A549 (cell line): ENCODE measurements at regions of chr17 and their contacts with region 1.

Region 1: GRCh38 chr17:40622509-40622928 is 25.1 kb downstream of the SMARCE1 start:
- DNase-seq: no peak
- ATAC-seq: no peak
- H3K4me3 ChIP-seq: no peak overlapping the region
- H3K27ac ChIP-seq: no peak overlapping the region
- H3K4me1 ChIP-seq: 0 out of 3 replicates have a peak, but pooled peaks cover 3% of the 10 kb centered on the region
- CTCF ChIP-seq: no peak
- EP300 ChIP-seq: no peak
- POLR2A ChIP-seq: no peak
- RAD21 ChIP-seq: no peak

Region 2: DNA sequence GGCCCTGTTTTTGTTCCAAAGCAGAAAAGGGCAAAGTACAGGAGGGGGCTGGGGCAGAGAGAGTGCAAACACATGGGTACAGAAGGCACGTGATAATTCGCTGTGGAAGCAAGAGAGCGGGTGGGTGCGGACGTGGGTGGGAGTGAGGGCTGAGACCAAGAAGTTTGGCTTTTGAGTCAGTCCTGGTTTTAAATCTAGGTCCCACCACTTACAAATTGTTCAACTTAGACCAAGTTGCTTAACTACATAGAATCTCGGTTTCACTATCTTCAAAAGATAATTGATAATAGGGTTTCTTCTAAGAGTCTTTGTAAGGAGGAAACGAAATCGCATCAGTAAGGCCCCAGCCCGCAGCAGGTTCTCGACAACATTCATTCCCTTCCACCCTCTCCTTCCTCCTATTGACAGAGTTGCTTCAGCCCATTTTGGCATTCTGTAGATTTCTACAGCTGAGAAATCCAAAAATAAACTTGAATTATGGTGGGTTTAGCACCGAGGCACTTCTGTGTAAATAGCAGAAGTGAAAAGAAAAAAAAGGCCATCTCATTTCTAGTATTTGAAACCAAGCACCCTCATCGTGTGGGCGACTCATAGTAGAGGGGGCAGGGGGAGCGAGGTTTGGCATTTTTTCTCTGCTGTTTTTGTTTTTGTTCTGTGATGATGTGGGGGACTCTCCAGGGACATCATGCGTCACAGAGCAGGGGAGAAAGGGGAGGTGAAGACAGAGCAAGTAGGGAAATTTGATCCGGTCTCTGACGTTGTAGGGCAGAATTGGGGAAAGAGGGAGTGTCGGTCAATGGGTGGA is 23.7 kb before region 1 on chr17:
- CTCF ChIA-PET with region 1: interaction called, 11 read pairs
- POLR2A ChIA-PET with region 1: no interaction called
- DNase-seq: no peak
- ATAC-seq: no peak
- H3K4me3 ChIP-seq: no peak overlapping the region
- H3K27ac ChIP-seq: no peak overlapping the region
- H3K4me1 ChIP-seq: no peaks in the 10 kb centered on the region
- CTCF ChIP-seq: no peak
- EP300 ChIP-seq: no peak
- POLR2A ChIP-seq: no peak
- RAD21 ChIP-seq: no peak

Region 3: GRCh38 chr17:40647624-40648383 is 25.3 kb after region 1 on chr17 and contains the start of gene SMARCE1:
- CTCF ChIA-PET with region 1: interaction called, 15 read pairs
- POLR2A ChIA-PET with region 1: interaction called, 4 read pairs
- DNase-seq: peak; percentile 72 to 87
- ATAC-seq: peak; percentile 87 to 89
- H3K4me3 ChIP-seq: peak within 1 kb of the TSS; percentile 79
- H3K27ac ChIP-seq: peak within 1 kb of the TSS; percentile 91 to 92
- H3K4me1 ChIP-seq: peaks cover 26% of the 10 kb centered on the region
- CTCF ChIP-seq: no peak
- EP300 ChIP-seq: no peak
- POLR2A ChIP-seq: peak; percentile 70
- RAD21 ChIP-seq: no peak; a peak in 1 of 5 replicates
- polyA plus RNA-seq, gene SMARCE1: 87.9 and 111 TPM in 2 replicates

Region 4: GRCh38 chr17:40722241-40722640 is 99.7 kb after region 1 on chr17:
- CTCF ChIA-PET with region 1: interaction called, 15 read pairs
- POLR2A ChIA-PET with region 1: no interaction called
- DNase-seq: no peak
- ATAC-seq: peak in 1 of 2 experiments; percentile 49; a peak in 1 of 6 replicates
- H3K4me3 ChIP-seq: no peak overlapping the region
- H3K27ac ChIP-seq: peak overlapping the region in 1 of 2 experiments; percentile 54; a peak in 1 of 6 replicates
- H3K4me1 ChIP-seq: peaks cover 17% of the 10 kb centered on the region
- CTCF ChIP-seq: no peak
- EP300 ChIP-seq: no peak
- POLR2A ChIP-seq: no peak
- RAD21 ChIP-seq: no peak

Region 5: DNA sequence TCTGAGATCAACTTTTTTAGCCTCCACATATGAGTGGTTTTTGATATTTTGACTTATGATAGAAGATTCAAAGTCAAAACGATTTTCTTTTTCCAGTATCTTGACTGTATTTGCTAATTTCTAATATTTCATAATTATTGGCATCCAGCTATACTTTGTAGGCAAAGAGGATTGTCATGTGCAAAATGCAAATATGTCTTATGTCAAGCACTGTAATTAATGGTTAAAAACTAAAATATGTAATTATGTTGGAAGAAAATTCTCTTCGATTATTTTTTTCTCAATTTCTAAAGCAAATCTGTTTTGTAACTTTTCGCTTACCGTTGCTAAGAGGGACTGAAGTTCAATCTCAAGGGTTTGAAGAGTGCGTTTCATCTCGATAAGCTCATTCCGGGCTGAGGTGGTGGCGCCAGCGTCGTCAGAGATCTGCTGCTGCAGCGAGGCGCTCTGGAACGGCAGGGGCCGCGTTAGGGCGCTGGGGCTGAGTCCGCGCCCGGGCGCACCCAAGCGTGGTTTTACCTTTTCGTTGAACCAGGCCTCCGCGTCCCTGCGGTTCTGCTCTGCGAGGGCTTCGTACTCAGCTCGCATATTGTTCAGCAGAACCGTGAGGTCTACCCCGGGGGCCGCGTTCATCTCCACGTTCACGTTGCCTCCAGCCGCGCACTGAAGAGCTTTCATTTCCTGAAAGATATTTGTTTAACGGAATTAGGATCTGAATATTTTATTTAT is 156.8 kb after region 1 on chr17:
- CTCF ChIA-PET with region 1: interaction called, 10 read pairs
- POLR2A ChIA-PET with region 1: no interaction called
- DNase-seq: peak; percentile 45 to 53
- ATAC-seq: peak; percentile 93 to 94
- H3K4me3 ChIP-seq: peak overlapping the region; percentile 39
- H3K27ac ChIP-seq: peak overlapping the region in 1 of 2 experiments; percentile 62; a peak in 3 of 6 replicates
- H3K4me1 ChIP-seq: 0 out of 3 replicates have a peak, but pooled peaks cover 5% of the 10 kb centered on the region
- CTCF ChIP-seq: no peak
- EP300 ChIP-seq: no peak
- POLR2A ChIP-seq: no peak
- RAD21 ChIP-seq: no peak

Region 6: GRCh38 chr17:40956401-40957254 is 334.1 kb after region 1 on chr17:
- CTCF ChIA-PET with region 1: no interaction called
- POLR2A ChIA-PET with region 1: no interaction called
- DNase-seq: peak in 1 of 2 experiments; percentile 77
- ATAC-seq: peak; percentile 65 to 75; a peak in 5 of 6 replicates
- H3K4me3 ChIP-seq: no peak overlapping the region
- H3K27ac ChIP-seq: peak overlapping the region; percentile 51 to 76; a peak in 5 of 6 replicates
- H3K4me1 ChIP-seq: peaks cover 36% of the 10 kb centered on the region
- CTCF ChIP-seq: no peak
- EP300 ChIP-seq: peak; percentile 80 to 88; a peak in 4 of 5 replicates
- POLR2A ChIP-seq: no peak
- RAD21 ChIP-seq: peak in 1 of 2 experiments; percentile 50; a peak in 3 of 5 replicates

Region 7: GRCh38 chr17:41659427-41660212 is 1037.1 kb after region 1 on chr17:
- CTCF ChIA-PET with region 1: interaction called, 53 read pairs
- POLR2A ChIA-PET with region 1: no interaction called
- DNase-seq: no peak
- ATAC-seq: no peak
- H3K4me3 ChIP-seq: no peak overlapping the region
- H3K27ac ChIP-seq: no peak overlapping the region
- H3K4me1 ChIP-seq: peaks cover 12% of the 10 kb centered on the region
- CTCF ChIP-seq: no peak
- EP300 ChIP-seq: no peak
- POLR2A ChIP-seq: no peak
- RAD21 ChIP-seq: no peak